Cardiac septum (tissue), 1 donor: ENCODE measurements at regions of chr4 and their contacts with region 1.

Region 1: GRCh38 chr4:94595879-94596483 is 144.2 kb downstream of the PDLIM5 start:
- DNase-seq: no peak

Region 2: DNA sequence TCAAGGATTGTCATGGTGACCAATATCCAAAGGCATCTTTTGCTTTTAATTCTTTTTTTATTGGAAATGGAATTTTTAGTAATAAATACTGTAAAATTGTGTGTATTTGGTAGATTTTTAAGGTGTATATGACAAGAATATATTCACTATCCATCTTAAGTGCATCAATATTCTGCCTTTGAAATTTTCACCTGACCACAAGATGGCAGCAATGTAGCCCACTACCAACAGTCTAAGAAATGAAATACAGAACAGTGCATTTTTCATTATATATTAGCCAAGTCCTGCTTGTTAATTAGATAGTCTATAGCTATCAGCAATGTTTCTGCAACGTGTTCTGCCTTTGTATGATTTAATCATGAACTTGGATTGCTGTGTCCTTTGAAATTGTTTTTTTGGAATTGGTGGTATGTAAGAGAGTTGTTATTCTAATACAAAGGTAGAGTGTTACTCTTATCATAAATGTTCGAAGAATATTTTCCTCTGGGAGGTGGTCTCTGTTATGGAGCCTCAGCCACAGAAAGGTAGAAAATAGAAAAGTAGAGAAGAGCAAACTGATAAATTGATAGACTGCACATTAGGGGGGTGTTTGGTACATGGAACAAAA is 291.5 kb before region 1 on chr4:
- intact Hi-C with region 1: loop called (anchors 10 kb)
- DNase-seq: no peak

Region 3: GRCh38 chr4:94406668-94407437 is 189.1 kb before region 1 on chr4:
- intact Hi-C with region 1: loop called (anchors 5 kb)
- DNase-seq: no peak